A673 (cell line): ENCODE measurements at regions of chr19 and their contacts with region 1.

Region 1: GRCh38 chr19:3464587-3465235 is 15.6 kb downstream of the SMIM24 start:
- DNase-seq: no peak
- H3K4me3 ChIP-seq: no peak overlapping the region
- H3K27ac ChIP-seq: no peak overlapping the region
- H3K4me1 ChIP-seq: no peaks in the 10 kb centered on the region
- H3K27me3 ChIP-seq: peaks cover 3% of the 10 kb centered on the region
- CTCF ChIP-seq: no peak

Region 2: DNA sequence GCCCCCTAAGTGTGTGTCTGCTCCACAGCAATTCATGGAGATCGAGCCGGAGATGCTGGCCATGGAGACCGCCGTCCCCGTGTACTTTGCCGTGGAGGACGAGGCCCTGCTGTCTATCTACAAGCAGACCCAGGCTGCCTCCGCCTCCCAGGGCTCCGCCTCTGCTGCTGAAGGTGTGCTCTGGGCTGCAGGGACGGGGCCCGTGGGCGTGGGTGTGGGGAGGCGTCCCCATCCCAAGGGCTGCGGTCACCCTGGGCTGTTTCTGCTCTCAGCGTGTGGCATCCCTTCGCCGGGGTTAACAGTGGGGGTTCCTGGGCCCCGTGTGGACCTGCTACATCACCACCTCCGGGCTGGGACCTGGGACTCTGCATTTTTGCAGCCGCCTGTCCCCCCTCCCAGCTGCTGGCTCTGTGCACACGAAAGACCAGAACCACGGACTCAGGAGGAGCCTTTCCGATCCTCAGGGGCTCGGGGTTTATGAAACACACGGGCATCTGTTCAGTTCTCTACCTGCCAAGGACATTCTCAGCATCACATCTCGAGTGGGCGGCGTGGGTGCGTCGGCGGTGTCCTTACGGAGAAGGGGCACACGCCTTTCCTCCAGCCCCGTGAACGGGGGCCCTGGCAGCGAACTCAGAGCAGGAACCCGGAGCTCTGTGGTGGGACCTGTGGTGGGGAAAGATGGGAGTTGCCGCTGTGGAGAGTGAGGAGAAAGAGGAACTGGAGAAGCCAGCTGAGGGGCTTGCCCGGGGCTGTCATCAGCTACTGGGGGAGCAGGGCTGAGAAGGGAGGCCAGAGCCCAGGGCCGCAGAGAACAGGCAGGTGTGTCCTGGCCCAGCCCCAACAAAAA is 271.2 kb before region 1 on chr19:
- CTCF ChIA-PET with region 1: no interaction called
- POLR2A ChIA-PET with region 1: no interaction called
- intact Hi-C with region 1: no loop called
- DNase-seq: no peak
- H3K4me3 ChIP-seq: no peak overlapping the region
- H3K27ac ChIP-seq: no peak overlapping the region
- H3K4me1 ChIP-seq: no peaks in the 10 kb centered on the region
- H3K27me3 ChIP-seq: no peaks in the 10 kb centered on the region
- CTCF ChIP-seq: no peak

Region 3: GRCh38 chr19:3284759-3285646 is 179.7 kb before region 1 on chr19:
- CTCF ChIA-PET with region 1: no interaction called
- POLR2A ChIA-PET with region 1: no interaction called
- intact Hi-C with region 1: no loop called
- DNase-seq: peak; percentile 71
- H3K4me3 ChIP-seq: no peak overlapping the region
- H3K27ac ChIP-seq: no peak overlapping the region
- H3K4me1 ChIP-seq: peaks cover 10% of the 10 kb centered on the region
- H3K27me3 ChIP-seq: no peaks in the 10 kb centered on the region
- CTCF ChIP-seq: no peak

Region 4: DNA sequence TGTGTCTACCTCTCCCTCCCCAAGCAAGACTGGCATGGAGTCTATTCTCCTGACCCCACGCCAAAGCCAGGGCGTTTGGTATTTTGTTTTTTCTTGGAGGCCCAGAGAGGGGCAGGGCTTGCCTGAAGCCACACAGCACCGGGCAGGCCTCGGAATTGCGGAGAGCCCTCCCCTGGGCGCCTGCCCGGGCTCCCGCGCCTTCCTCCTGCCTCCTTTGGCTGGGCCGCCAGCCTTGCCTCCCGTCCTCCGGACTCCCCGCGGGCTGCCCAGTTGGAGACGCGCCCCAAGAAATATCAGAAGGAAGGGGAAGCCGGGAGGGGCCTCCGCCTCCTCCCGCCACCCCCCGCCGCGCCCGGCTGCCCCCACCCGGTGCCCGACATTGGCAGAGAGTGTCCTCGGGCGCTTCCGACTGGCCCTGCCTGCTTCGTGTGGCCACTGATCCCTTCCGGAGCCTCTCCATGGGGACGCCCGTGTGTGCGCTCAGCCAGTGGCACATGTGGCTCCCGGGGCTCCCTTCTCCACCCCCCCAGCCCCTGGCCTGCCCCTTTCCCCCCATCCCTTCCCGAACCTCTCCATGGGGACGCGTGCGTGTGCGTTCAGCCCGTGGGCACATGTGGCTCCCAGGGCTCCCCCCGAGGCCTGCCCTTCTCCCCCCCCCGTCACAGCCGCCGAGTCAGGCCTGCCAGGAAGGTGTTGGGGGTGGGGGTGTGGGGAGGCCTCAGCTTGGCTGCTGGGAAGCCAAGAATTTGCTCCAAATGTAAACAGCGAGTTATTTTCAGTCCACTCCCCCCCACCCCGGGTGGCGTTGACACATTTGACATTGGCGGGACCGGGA is 61.0 kb before region 1 on chr19:
- CTCF ChIA-PET with region 1: no interaction called
- POLR2A ChIA-PET with region 1: no interaction called
- intact Hi-C with region 1: no loop called
- DNase-seq: peak; percentile 70
- H3K4me3 ChIP-seq: no peak overlapping the region
- H3K27ac ChIP-seq: peak overlapping the region; percentile 86
- H3K4me1 ChIP-seq: peaks cover 22% of the 10 kb centered on the region
- H3K27me3 ChIP-seq: no peaks in the 10 kb centered on the region
- CTCF ChIP-seq: no peak

Region 5: GRCh38 chr19:3450796-3451411 is 13.8 kb before region 1 on chr19:
- CTCF ChIA-PET with region 1: no interaction called
- POLR2A ChIA-PET with region 1: no interaction called
- intact Hi-C with region 1: no loop called
- DNase-seq: peak; percentile 67
- H3K4me3 ChIP-seq: no peak overlapping the region
- H3K27ac ChIP-seq: no peak overlapping the region
- H3K4me1 ChIP-seq: no peaks in the 10 kb centered on the region
- H3K27me3 ChIP-seq: no peaks in the 10 kb centered on the region
- CTCF ChIP-seq: no peak

Region 6: GRCh38 chr19:3494051-3494450 is 29.3 kb after region 1 on chr19:
- CTCF ChIA-PET with region 1: no interaction called
- POLR2A ChIA-PET with region 1: interaction called, 15 read pairs
- intact Hi-C with region 1: no loop called
- DNase-seq: no peak
- H3K4me3 ChIP-seq: no peak overlapping the region
- H3K27ac ChIP-seq: no peak overlapping the region
- H3K4me1 ChIP-seq: no peaks in the 10 kb centered on the region
- H3K27me3 ChIP-seq: no peaks in the 10 kb centered on the region
- CTCF ChIP-seq: no peak